Transverse colon (tissue), 4 donors: ENCODE measurements at regions of chr2 and their contacts with region 1.

Region 1: GRCh38 chr2:10572701-10573100 is 117.1 kb downstream of the NOL10 start:
- DNase-seq: no peak
- H3K4me3 ChIP-seq: no peak overlapping the region
- H3K27ac ChIP-seq: no peak overlapping the region
- H3K4me1 ChIP-seq: no peaks in the 10 kb centered on the region
- H3K27me3 ChIP-seq: no peaks in the 10 kb centered on the region
- CTCF ChIP-seq: no peak
- EP300 ChIP-seq: no peak
- POLR2A ChIP-seq: no peak

Region 2: GRCh38 chr2:10497797-10498251 is 74.9 kb before region 1 on chr2:
- in situ Hi-C with region 1: no loop called
- intact Hi-C with region 1: loop called (anchors 2 kb)
- DNase-seq: peak; percentile 86
- H3K4me3 ChIP-seq: no peak overlapping the region
- H3K27ac ChIP-seq: peak overlapping the region in 1 of 4 donors; percentile 20
- H3K4me1 ChIP-seq: peaks cover 0 to 25% (median 13%) of the 10 kb centered on the region in 4 donors
- H3K27me3 ChIP-seq: peaks cover 16% of the 10 kb centered on the region
- CTCF ChIP-seq: no peak
- EP300 ChIP-seq: no peak
- POLR2A ChIP-seq: no peak